ENCODE measurements at regions of chr20 and their contacts with region 1.

Region 1: GRCh38 chr20:219290-220115 is 7.6 kb upstream of the DEFB129 start:
- DNase-seq: no peak
- H3K4me3 ChIP-seq: no peak overlapping the region
- H3K27ac ChIP-seq: no peak overlapping the region
- H3K4me1 ChIP-seq: no peaks in the 10 kb centered on the region
- H3K27me3 ChIP-seq: peaks cover 0 to 46% (median 0%) of the 10 kb centered on the region in 4 donors
- CTCF ChIP-seq: peak in 2 of 6 experiments; percentile 6 to 16
- POLR2A ChIP-seq: no peak

Region 2: GRCh38 chr20:266596-267562 is 47.4 kb after region 1 on chr20:
- intact Hi-C with region 1: loop called (anchors 10 kb)
- DNase-seq: peak; percentile 24
- H3K4me3 ChIP-seq: peak overlapping the region; percentile 12 to 62 (median 46)
- H3K27ac ChIP-seq: no peak overlapping the region
- H3K4me1 ChIP-seq: peaks cover 3 to 12% (median 4%) of the 10 kb centered on the region in 3 donors
- H3K27me3 ChIP-seq: peaks cover 0 to 18% (median 0%) of the 10 kb centered on the region in 4 donors
- CTCF ChIP-seq: peak; percentile 88 to 99 (median 91)
- POLR2A ChIP-seq: no peak

Region 3: DNA sequence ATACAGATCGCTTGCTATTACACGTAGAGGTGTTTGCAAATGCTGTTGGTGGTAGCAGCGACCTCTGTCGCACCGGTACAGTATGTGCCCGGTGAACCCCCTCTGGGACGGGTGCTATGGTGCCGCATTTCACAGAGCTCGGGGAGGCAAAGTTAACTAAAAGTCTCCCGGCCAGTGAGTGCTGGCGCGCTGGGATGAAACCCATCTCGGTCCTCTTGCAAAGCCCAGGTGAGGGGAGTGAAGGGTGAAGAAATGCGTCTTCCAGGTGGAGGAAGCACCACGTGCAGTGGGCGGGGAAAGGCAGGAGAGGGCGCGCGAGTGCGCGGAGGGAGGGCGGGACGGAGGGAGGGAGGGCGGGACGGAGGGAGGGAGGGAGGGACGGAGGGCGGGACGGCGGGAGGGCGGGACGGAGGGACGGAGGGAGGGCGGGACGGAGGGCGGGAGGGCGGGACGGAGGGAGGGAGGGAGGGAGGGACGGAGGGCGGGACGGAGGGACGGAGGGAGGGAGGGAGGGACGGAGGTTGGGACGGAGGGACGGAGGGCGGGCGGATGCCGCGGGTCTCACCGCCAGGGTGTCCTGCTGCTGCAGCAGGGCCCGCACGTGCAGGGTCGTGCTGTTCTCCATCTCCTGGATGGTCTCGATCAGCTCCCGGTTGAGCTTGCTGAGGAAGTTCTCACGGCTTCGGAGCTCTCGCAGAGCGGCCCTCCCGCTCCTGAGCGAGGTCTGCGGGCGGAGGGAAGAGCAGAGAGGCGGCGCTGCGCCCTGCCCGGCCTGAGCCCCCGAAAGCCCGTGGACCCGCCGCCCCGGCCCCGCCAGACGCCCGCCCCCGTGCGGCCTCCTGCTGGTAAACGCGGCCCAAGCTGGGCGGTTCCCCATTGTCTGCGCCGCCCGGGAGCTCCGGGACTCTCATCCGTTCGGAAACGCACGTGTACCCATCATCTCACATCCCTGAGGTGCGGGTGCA is 59.4 kb after region 1 on chr20:
- intact Hi-C with region 1: no loop called
- DNase-seq: no peak
- H3K4me3 ChIP-seq: peak overlapping the region in 1 of 4 donors; percentile 50
- H3K27ac ChIP-seq: no peak overlapping the region
- H3K4me1 ChIP-seq: no peaks in the 10 kb centered on the region
- H3K27me3 ChIP-seq: no peaks in the 10 kb centered on the region
- CTCF ChIP-seq: peak in 1 of 6 experiments; percentile 9
- POLR2A ChIP-seq: no peak

Region 4: DNA sequence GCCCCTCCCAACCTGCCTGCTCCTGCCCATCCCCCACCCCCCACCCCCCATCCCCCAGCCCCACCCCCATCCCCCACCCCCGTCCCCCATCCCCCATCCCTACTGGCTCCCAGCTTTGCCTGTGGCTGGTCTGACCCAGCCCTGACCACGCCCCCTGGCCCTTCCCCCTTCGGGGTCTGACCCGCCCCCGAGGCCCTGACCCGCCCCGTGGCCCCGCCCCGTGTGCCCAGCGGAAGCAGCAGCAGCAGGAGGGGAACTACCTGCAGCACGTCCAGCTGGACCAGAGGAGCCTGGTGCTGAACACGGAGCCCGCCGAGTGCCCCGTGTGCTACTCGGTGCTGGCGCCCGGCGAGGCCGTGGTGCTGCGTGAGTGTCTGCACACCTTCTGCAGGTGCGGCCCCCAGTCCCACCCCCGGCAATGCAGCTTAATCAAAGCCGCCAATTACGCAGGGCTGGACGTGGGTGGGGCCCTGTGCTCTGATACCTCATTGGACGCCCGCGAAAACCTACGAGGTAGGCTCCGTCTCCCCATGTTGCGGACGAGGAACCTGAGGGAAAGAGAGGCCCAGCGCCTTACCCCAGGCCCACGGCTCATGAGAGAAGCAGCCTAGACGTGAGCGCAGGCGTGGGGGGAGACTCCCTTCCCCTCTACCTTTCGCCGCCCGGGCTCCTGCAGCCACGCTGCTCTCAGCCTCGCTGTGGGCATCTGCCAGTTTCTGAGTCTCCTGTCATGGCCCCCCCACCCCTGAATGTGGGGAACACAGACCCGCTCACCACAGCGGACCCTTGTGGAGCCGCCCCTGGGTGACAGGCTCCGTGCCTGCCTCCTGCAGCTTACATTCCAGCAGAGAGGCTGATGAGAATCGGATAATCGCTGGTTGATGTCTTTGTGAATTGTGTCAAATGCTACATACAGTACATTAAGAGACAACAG is 201.4 kb after region 1 on chr20:
- intact Hi-C with region 1: no loop called
- DNase-seq: no peak
- H3K4me3 ChIP-seq: no peak overlapping the region
- H3K27ac ChIP-seq: no peak overlapping the region
- H3K4me1 ChIP-seq: peaks cover 0 to 9% (median 0%) of the 10 kb centered on the region in 3 donors
- H3K27me3 ChIP-seq: no peaks in the 10 kb centered on the region
- CTCF ChIP-seq: no peak
- POLR2A ChIP-seq: no peak

Region 5: DNA sequence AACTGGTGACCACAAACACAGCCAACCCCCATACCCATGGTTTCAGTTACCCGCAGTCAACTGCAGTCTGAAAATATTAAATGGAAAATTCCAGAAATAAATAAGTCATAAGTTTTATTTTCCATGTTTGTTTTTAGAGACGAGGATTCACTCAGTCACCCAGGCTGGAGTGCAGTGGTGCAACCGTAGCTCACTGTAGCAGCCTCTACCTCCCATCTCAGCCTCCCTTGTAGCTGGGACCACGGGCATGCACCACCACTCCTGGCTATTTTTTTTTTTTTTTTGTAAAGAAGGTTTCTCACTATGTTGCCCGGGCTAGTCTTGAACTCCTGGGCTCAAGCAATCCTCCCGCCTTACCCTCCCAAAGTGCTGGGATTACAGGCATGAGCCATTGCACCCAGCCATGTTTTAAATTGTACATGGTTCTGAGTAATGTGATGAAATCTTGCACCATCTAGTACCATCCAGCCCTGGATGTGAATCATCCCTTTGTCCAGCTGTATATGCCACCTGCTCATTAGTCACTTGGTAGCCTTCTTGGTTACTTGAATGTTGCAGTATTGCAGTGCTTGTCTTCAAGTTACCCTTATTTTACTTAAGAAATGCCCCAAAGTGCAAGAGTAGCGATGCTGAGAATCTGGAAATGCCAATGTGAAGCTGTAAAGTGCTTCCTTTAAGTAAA is 309.6 kb after region 1 on chr20:
- intact Hi-C with region 1: no loop called
- DNase-seq: no peak
- H3K4me3 ChIP-seq: no peak overlapping the region
- H3K27ac ChIP-seq: no peak overlapping the region
- H3K4me1 ChIP-seq: peaks cover 0 to 46% (median 3%) of the 10 kb centered on the region in 3 donors
- H3K27me3 ChIP-seq: no peaks in the 10 kb centered on the region
- CTCF ChIP-seq: no peak
- POLR2A ChIP-seq: no peak